OCI-LY7 (cell line): ENCODE measurements at regions of chr9 and their contacts with region 1.

Region 1: GRCh38 chr9:14353222-14354056 is 39.5 kb upstream of the NFIB start:
- DNase-seq: peak; percentile 81
- H3K4me3 ChIP-seq: no peak overlapping the region
- H3K27ac ChIP-seq: no peak overlapping the region
- H3K4me1 ChIP-seq: no peaks in the 10 kb centered on the region
- CTCF ChIP-seq: peak; percentile 91

Region 2: DNA sequence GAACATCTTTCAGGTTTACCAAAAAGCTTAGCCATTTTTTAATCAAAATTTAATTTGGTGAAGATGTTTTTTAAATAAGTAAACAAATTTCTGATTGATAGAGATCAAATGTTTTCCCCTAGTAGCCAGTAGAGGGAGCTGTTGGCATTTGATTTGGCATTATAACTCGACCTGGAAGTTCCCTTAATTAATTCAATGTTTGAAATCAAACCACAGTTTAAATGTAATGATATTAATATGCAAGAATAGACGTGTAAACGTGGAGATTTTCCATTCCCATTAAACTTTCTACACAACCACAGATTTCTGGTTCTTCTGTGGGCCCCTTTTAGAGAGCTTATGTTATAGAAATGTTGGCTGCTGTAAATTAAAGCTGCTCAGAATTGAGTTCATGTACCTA is 925.9 kb before region 1 on chr9:
- CTCF ChIA-PET with region 1: no interaction called
- POLR2A ChIA-PET with region 1: no interaction called
- intact Hi-C with region 1: loop called (anchors 2 kb)
- DNase-seq: peak; percentile 57
- H3K4me3 ChIP-seq: no peak overlapping the region
- H3K27ac ChIP-seq: no peak overlapping the region
- H3K4me1 ChIP-seq: no peaks in the 10 kb centered on the region
- CTCF ChIP-seq: peak; percentile 94

Region 3: GRCh38 chr9:13911473-13911872 is 442.0 kb before region 1 on chr9:
- CTCF ChIA-PET with region 1: no interaction called
- POLR2A ChIA-PET with region 1: no interaction called
- intact Hi-C with region 1: loop called (anchors 5 kb)
- DNase-seq: no peak
- H3K4me3 ChIP-seq: no peak overlapping the region
- H3K27ac ChIP-seq: no peak overlapping the region
- H3K4me1 ChIP-seq: no peaks in the 10 kb centered on the region
- CTCF ChIP-seq: no peak

Region 4: DNA sequence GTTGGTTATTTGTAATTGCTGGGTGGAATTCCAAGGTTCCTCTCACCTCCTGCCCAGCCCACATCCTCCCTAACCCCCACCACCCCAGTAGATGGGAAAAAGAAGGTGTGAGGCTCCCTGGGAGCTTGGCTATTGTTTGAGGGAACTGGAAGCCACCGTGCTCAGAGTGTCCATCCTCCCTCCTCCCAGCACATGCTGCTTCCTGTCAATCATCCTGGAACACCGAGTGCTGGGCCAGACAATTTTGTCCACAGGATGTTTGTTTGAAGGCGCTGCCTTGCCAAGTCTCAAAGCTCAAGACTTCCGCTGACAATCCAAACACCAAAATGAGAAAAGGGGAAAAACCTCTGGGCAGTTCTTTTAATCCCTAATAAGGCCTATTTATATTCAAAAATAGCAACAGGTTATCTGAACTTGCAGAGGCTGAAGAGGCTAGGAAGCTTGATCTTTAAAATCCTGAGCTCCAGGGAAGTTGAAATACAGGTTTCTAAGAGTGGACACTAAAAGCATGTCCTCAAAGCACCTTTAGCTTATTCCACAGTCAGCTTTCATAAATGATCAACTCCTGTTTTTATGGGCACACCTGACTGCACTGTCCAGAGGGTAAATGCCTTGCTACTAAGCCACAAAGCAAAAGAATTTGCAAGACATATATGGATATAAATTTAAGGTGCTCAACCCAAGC is 326.2 kb before region 1 on chr9:
- CTCF ChIA-PET with region 1: no interaction called
- POLR2A ChIA-PET with region 1: no interaction called
- intact Hi-C with region 1: loop called (anchors 5 kb)
- DNase-seq: no peak
- H3K4me3 ChIP-seq: no peak overlapping the region
- H3K27ac ChIP-seq: no peak overlapping the region
- H3K4me1 ChIP-seq: no peaks in the 10 kb centered on the region
- CTCF ChIP-seq: no peak

Region 5: DNA sequence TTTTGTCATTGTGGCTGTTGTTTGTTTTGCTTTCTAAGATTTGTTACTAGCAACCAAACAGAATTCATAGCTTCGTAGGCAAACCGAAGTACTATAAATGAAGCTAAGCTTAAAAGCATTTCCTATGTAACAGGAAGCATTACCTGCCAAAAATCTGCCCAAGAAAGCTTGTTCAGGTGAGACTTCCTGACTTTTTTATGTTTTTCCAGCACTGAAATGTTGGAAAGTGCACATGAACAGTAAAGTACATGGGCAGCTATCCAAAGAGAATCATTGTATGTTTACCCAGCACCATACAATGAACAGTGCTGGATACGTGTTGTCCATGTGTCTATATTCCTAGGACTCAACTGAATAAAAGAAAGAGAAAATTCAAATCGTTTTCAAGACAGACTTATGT is 286.6 kb before region 1 on chr9:
- CTCF ChIA-PET with region 1: no interaction called
- POLR2A ChIA-PET with region 1: no interaction called
- intact Hi-C with region 1: loop called (anchors 5 kb)
- DNase-seq: no peak
- H3K4me3 ChIP-seq: no peak overlapping the region
- H3K27ac ChIP-seq: no peak overlapping the region
- H3K4me1 ChIP-seq: no peaks in the 10 kb centered on the region
- CTCF ChIP-seq: no peak

Region 6: DNA sequence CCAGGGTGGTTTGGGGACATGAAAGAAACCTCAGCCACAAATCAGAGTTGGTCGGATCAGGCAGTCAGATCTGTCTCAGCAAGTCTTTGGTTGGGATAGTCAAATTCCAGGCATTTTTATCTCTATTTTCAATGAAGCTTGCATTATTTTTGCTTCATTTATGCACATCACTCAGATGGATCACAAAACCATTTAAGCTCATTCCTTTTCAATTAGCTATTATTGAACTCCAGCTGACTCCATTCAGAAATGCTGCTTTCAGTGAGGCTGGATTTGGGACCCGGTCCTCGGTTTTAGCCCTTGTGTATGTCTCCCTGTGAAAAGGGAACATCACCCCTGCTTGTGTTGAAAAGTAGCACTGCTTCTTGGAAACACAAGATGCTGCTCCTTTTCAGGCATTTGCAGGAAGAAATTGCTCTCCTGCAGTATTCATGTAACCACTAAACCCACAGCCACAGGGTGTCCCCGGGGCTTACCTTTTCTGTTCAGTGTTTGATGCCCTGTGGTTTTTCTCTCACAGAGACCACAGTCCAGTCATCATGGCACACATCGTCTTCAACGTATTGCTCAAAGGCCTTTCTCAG is 272.4 kb before region 1 on chr9:
- CTCF ChIA-PET with region 1: no interaction called
- POLR2A ChIA-PET with region 1: no interaction called
- intact Hi-C with region 1: loop called (anchors 5 kb)
- DNase-seq: peak; percentile 22
- H3K4me3 ChIP-seq: no peak overlapping the region
- H3K27ac ChIP-seq: no peak overlapping the region
- H3K4me1 ChIP-seq: no peaks in the 10 kb centered on the region
- CTCF ChIP-seq: no peak